Heart right ventricle (tissue), 16 donors: ENCODE measurements at regions of chr2 and their contacts with region 1.

Region 1: DNA sequence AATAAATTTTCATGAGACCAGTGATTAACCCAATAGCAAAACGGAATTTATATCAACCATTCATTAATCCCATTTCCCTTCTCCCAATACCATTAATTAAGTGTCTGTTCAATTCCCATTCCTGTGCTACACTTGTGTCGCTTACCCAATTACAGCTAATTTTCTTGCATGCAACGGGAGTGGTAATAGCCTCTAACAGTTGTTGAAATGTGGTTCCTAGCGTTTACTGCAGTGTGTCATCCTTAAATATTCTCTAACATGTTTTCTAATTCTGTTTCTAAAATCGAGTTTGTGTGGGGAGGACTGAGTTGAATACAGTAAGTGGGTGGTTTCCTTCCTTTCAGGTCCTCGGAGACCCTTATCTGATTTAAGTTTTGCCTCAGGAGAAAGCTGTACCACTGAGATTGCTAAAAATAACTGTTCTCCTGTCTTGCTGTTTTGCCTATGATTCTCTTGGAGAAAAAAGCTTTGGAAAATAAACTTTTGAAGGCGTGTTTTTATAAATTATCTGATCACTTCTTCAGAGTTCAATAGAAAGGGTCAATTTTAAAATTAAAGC is 59.3 kb upstream of the LRRTM1 start:
- DNase-seq: no peak
- ATAC-seq: peak in 6 of 8 donors; percentile 15 to 89 (median 84)
- H3K4me3 ChIP-seq: peak overlapping the region in 2 of 10 donors; percentile 4 to 25
- H3K27ac ChIP-seq: peak overlapping the region in 7 of 10 donors; percentile 12 to 73 (median 46)
- H3K4me1 ChIP-seq: peaks cover 0 to 32% (median 8%) of the 10 kb centered on the region in 9 donors
- H3K27me3 ChIP-seq: no peaks in the 10 kb centered on the region
- CTCF ChIP-seq: no peak

Region 2: GRCh38 chr2:80482276-80482675 is 118.4 kb after region 1 on chr2:
- intact Hi-C with region 1: loop called in 2 of 10 experiments (anchors 5 kb)
- DNase-seq: no peak
- ATAC-seq: peak in 5 of 8 donors; percentile 25 to 77 (median 65)
- H3K4me3 ChIP-seq: no peak overlapping the region
- H3K27ac ChIP-seq: peak overlapping the region in 6 of 10 donors; percentile 34 to 65 (median 54)
- H3K4me1 ChIP-seq: peaks cover 0 to 20% (median 0%) of the 10 kb centered on the region in 9 donors
- H3K27me3 ChIP-seq: no peaks in the 10 kb centered on the region
- CTCF ChIP-seq: no peak